B cell (primary cell): ENCODE measurements at regions of chrX and their contacts with region 1.

Region 1: GRCh38 chrX:101931488-101932248 is at the start of gene ZMAT1:
- DNase-seq: peak; percentile 95
- ATAC-seq: peak; percentile 84
- H3K4me3 ChIP-seq: peak within 1 kb of the TSS; percentile 41 to 68 (median 61)
- H3K4me3 Mint-ChIP-seq: peak within 1 kb of the TSS; percentile 83
- H3K27ac ChIP-seq: peak within 1 kb of the TSS; percentile 94 to 97
- H3K27ac Mint-ChIP-seq: peak within 1 kb of the TSS; percentile 95
- H3K4me1 ChIP-seq: peaks cover 6 to 12% of the 10 kb centered on the region in 2 donors
- H3K4me1 Mint-ChIP-seq: peaks cover 17% of the 10 kb centered on the region
- H3K27me3 ChIP-seq: peaks cover 0 to 2% (median 0%) of the 10 kb centered on the region in 4 experiments
- H3K27me3 Mint-ChIP-seq: no peaks in the 10 kb centered on the region
- CTCF ChIP-seq: no peak
- total RNA-seq, gene ZMAT1: 38.4 and 43.6 TPM in 2 replicates

Region 2: GRCh38 chrX:101918751-101919150 is 12.9 kb before region 1 on chrX:
- CTCF ChIA-PET with region 1: no interaction called
- POLR2A ChIA-PET with region 1: no interaction called
- intact Hi-C with region 1: no loop called
- DNase-seq: no peak
- ATAC-seq: no peak
- H3K4me3 ChIP-seq: no peak overlapping the region
- H3K4me3 Mint-ChIP-seq: no peak overlapping the region
- H3K27ac ChIP-seq: no peak overlapping the region
- H3K27ac Mint-ChIP-seq: no peak overlapping the region
- H3K4me1 ChIP-seq: no peaks in the 10 kb centered on the region
- H3K4me1 Mint-ChIP-seq: no peaks in the 10 kb centered on the region
- H3K27me3 ChIP-seq: no peaks in the 10 kb centered on the region
- H3K27me3 Mint-ChIP-seq: no peaks in the 10 kb centered on the region
- CTCF ChIP-seq: no peak

Region 3: DNA sequence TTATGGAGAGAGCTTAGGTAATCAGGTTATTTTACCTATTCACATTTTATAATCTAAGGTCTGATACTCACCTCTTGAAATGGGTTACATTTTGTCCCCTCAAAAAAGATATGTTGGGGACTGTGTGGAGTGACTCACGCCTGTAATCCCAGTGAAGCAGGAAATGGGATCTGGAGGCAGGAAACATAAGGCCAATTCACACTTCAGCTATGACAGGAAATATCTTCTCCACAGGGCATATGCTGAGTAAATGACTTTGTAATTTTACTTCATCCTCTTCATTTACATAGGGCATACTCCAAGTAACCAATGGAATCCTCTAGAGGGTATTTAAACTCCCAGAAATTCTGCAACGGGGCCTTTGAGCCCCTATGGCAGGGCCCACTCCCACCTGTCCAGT is 54.9 kb after region 1 on chrX:
- CTCF ChIA-PET with region 1: no interaction called
- POLR2A ChIA-PET with region 1: interaction called, 11 read pairs
- intact Hi-C with region 1: no loop called
- DNase-seq: no peak
- ATAC-seq: no peak
- H3K4me3 ChIP-seq: no peak overlapping the region
- H3K4me3 Mint-ChIP-seq: no peak overlapping the region
- H3K27ac ChIP-seq: no peak overlapping the region
- H3K27ac Mint-ChIP-seq: no peak overlapping the region
- H3K4me1 ChIP-seq: no peaks in the 10 kb centered on the region
- H3K4me1 Mint-ChIP-seq: no peaks in the 10 kb centered on the region
- H3K27me3 ChIP-seq: no peaks in the 10 kb centered on the region
- H3K27me3 Mint-ChIP-seq: no peaks in the 10 kb centered on the region
- CTCF ChIP-seq: no peak

Region 4: GRCh38 chrX:102659790-102660757 is 728.4 kb after region 1 on chrX:
- CTCF ChIA-PET with region 1: no interaction called
- POLR2A ChIA-PET with region 1: no interaction called
- intact Hi-C with region 1: loop called (anchors 10 kb)
- DNase-seq: peak; percentile 83
- ATAC-seq: peak; percentile 89
- H3K4me3 ChIP-seq: peak overlapping the region; percentile 48 to 73 (median 65)
- H3K4me3 Mint-ChIP-seq: peak overlapping the region; percentile 94
- H3K27ac ChIP-seq: peak overlapping the region; percentile 47 to 78
- H3K27ac Mint-ChIP-seq: peak overlapping the region; percentile 93
- H3K4me1 ChIP-seq: peaks cover 0 to 5% of the 10 kb centered on the region in 2 donors
- H3K4me1 Mint-ChIP-seq: peaks cover 18% of the 10 kb centered on the region
- H3K27me3 ChIP-seq: no peaks in the 10 kb centered on the region
- H3K27me3 Mint-ChIP-seq: no peaks in the 10 kb centered on the region
- CTCF ChIP-seq: peak; percentile 26